ENCODE measurements at regions of chr6 and their contacts with region 1.

Region 1: DNA sequence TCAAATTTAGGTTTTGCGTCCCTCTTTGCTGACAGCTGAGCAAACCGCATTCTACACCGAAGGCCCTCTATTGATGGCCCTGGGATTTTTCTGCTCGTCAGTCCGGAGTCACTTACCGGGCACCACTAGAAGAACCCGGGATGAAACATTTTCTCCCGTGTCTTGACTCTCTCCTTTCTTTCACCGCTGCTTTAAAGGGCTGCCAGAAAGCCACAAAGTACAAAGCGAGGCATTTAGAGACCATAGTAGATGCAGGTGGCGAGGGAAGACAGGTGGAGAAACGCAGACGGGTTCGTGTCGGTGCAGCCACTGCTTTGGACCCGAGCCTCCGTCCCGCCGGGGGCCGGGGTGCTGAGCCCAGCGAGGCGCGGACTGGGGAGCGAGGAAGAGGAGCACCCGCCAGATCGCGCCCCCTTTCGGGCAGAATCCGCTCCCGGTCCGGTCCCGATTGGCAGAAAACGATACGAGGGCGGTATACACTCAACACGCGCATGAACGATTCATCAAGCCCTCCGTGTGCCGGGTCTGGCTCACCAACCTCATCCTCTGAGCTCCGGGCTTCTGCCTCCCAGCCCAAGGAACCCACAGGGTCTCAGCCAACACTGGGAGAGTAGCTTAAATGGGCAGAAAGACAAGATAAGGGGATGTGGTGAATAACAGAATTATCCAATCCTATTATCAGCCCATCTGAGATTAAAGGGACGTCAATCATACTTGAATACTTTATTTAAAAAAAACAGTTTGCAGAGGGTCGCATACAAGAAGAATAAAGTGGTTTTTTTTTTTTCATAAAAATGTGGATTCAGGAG is 84.9 kb downstream of the TRIM27 start:
- DNase-seq: peak; percentile 80
- ATAC-seq: peak; percentile 95
- H3K4me3 ChIP-seq: peak overlapping the region; percentile 65
- H3K27ac ChIP-seq: no peak overlapping the region
- H3K4me1 ChIP-seq: no peaks in the 10 kb centered on the region
- H3K27me3 ChIP-seq: no peaks in the 10 kb centered on the region
- CTCF ChIP-seq: peak; percentile 71
- POLR2A ChIP-seq: no peak
- RAD21 ChIP-seq: peak; percentile 38

Region 2: GRCh38 chr6:28683944-28684538 is 154.8 kb before region 1 on chr6:
- CTCF ChIA-PET with region 1: no interaction called
- POLR2A ChIA-PET with region 1: no interaction called
- dilution Hi-C with region 1: no loop called
- in situ Hi-C with region 1: no loop called
- intact Hi-C with region 1: loop called (anchors 2 kb)
- DNase-seq: peak; percentile 34
- ATAC-seq: peak; percentile 87
- H3K4me3 ChIP-seq: no peak overlapping the region
- H3K27ac ChIP-seq: no peak overlapping the region
- H3K4me1 ChIP-seq: no peaks in the 10 kb centered on the region
- H3K27me3 ChIP-seq: peaks cover 2% of the 10 kb centered on the region; the same call in 1 of the 2 replicates
- CTCF ChIP-seq: peak; percentile 58
- POLR2A ChIP-seq: no peak
- RAD21 ChIP-seq: peak; percentile 62

Region 3: GRCh38 chr6:28863604-28864320 is 24.9 kb after region 1 on chr6:
- CTCF ChIA-PET with region 1: interaction called, 3 read pairs
- POLR2A ChIA-PET with region 1: no interaction called
- dilution Hi-C with region 1: no loop called
- in situ Hi-C with region 1: no loop called
- intact Hi-C with region 1: loop called (anchors 1 kb)
- DNase-seq: peak; percentile 82
- ATAC-seq: peak; percentile 86
- H3K4me3 ChIP-seq: peak overlapping the region; percentile 87
- H3K27ac ChIP-seq: no peak overlapping the region
- H3K4me1 ChIP-seq: 0 out of 2 replicates have a peak, but pooled peaks cover 2% of the 10 kb centered on the region
- H3K27me3 ChIP-seq: no peaks in the 10 kb centered on the region
- CTCF ChIP-seq: no peak
- POLR2A ChIP-seq: no peak
- RAD21 ChIP-seq: no peak

Region 4: DNA sequence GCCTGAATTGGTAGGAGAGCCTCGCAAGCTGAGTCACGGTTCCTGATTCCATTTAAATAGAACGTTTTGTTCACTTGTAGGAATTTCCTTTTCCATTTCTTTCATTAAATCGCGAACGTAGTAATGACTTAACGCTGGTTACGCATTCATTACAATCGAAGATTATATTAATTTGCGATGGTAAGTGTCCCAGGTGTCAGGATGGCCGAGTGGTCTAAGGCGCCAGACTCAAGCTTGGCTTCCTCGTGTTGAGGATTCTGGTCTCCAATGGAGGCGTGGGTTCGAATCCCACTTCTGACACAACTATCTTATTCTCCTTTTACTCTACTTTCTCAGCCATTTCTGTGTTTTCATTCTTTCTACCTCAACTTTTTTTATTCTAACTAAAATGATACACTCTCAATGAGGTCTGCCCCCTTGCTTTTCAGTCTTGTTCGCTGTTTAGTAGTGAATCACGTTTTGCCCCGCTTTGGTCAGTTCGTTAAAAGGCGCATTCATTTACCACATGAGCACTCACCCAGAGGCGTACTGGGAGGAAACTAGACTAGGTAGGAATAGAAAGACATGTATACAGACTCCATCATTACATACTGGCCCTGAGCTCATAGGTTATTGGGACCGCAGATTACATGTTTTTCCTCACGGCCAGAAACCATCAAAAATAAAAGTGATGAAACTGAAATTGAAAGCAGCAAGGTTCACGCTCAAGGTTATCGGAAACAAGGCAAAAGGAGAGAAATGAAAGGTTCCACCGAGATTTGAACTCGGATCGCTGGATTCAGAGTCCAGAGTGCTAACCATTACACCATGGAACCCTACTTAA is 102.2 kb after region 1 on chr6:
- CTCF ChIA-PET with region 1: no interaction called
- POLR2A ChIA-PET with region 1: no interaction called
- dilution Hi-C with region 1: no loop called
- in situ Hi-C with region 1: no loop called
- intact Hi-C with region 1: loop called (anchors 1 kb)
- DNase-seq: peak; percentile 88
- ATAC-seq: peak; percentile 73
- H3K4me3 ChIP-seq: peak overlapping the region; percentile 74
- H3K27ac ChIP-seq: peak overlapping the region; percentile 18
- H3K4me1 ChIP-seq: no peaks in the 10 kb centered on the region
- H3K27me3 ChIP-seq: no peaks in the 10 kb centered on the region
- CTCF ChIP-seq: no peak
- POLR2A ChIP-seq: no peak
- RAD21 ChIP-seq: no peak

Region 5: GRCh38 chr6:29399525-29399924 is 560.7 kb after region 1 on chr6:
- CTCF ChIA-PET with region 1: no interaction called
- POLR2A ChIA-PET with region 1: no interaction called
- dilution Hi-C with region 1: no loop called
- in situ Hi-C with region 1: no loop called
- intact Hi-C with region 1: no loop called
- DNase-seq: no peak
- ATAC-seq: no peak
- H3K4me3 ChIP-seq: no peak overlapping the region
- H3K27ac ChIP-seq: no peak overlapping the region
- H3K4me1 ChIP-seq: no peaks in the 10 kb centered on the region
- H3K27me3 ChIP-seq: no peaks in the 10 kb centered on the region
- CTCF ChIP-seq: no peak
- POLR2A ChIP-seq: no peak
- RAD21 ChIP-seq: no peak

Region 6: GRCh38 chr6:29589423-29590048 is 750.7 kb after region 1 on chr6:
- CTCF ChIA-PET with region 1: no interaction called
- POLR2A ChIA-PET with region 1: no interaction called
- dilution Hi-C with region 1: no loop called
- in situ Hi-C with region 1: no loop called
- intact Hi-C with region 1: loop called (anchors 10 kb)
- DNase-seq: peak; percentile 47
- ATAC-seq: peak; percentile 94
- H3K4me3 ChIP-seq: no peak overlapping the region
- H3K27ac ChIP-seq: no peak overlapping the region
- H3K4me1 ChIP-seq: no peaks in the 10 kb centered on the region
- H3K27me3 ChIP-seq: no peaks in the 10 kb centered on the region
- CTCF ChIP-seq: peak; percentile 78
- POLR2A ChIP-seq: no peak
- RAD21 ChIP-seq: peak; percentile 78

Measured in IMR-90 (cell line).